Heart left ventricle (tissue), 16 donors: ENCODE measurements at regions of chr2 and their contacts with region 1.

Region 1: DNA sequence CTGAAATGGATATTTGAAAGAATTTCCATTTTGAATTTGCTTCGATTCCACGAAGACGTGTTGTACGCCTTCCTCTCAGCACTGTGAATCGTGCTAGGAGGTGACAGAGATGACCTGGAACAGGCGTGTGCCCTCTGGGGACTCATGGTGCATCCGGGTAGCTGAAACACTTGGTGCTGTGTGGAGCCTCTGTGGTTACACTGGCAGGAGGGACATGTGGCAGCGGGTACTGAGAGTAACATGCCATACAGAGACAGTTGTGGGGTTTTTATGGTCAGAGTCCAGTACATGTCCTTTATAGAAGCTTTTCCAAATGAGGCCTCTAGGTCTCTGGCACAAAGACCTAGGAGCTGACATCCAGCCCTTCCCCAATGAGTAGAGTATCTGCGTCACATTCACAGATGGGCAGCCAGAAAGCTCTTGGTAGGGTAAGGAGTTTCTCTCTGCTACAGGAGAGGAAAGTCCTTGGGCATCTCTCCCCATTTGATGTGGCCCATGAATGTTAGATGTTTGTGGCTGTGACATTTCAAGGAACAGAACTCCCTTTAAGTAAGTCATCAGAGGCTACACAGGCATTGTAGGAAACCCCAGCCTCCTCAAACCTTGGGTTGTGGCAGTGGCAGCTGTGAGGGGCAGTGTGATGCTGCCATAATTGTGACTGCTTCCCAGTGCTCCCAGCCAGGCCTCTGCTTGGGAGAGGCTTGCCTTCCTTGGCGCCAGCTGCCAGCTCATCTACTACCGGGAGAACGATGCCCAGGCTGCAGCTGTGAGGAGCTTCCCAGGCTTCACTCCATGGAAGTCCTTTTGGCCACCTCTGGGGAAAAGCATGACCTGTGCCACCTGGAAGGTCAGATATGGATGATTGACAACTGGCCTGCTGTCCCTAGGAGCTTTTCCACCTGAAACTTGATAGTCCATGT is 80.6 kb downstream of the ACOXL start:
- DNase-seq: no peak
- ATAC-seq: no peak
- H3K4me3 ChIP-seq: no peak overlapping the region
- H3K27ac ChIP-seq: no peak overlapping the region
- H3K4me1 ChIP-seq: peaks cover 0 to 4% (median 0%) of the 10 kb centered on the region in 12 donors
- H3K27me3 ChIP-seq: no peaks in the 10 kb centered on the region
- CTCF ChIP-seq: no peak
- POLR2A ChIP-seq: no peak

Region 2: GRCh38 chr2:111659416-111660281 is 846.7 kb after region 1 on chr2:
- intact Hi-C with region 1: loop called in 2 of 10 experiments (anchors 5 to 10 kb)
- DNase-seq: peak in 2 of 5 donors; percentile 62 to 64
- ATAC-seq: peak; percentile 42 to 80 (median 71)
- H3K4me3 ChIP-seq: no peak overlapping the region
- H3K27ac ChIP-seq: peak overlapping the region in 1 of 12 donors; percentile 59
- H3K4me1 ChIP-seq: peaks cover 0 to 27% (median 0%) of the 10 kb centered on the region in 12 donors
- H3K27me3 ChIP-seq: no peaks in the 10 kb centered on the region
- CTCF ChIP-seq: no peak
- POLR2A ChIP-seq: no peak

Region 3: GRCh38 chr2:111667542-111668273 is 854.7 kb after region 1 on chr2:
- intact Hi-C with region 1: loop called in 4 of 10 experiments (anchors 5 to 10 kb)
- DNase-seq: peak in 3 of 5 donors; percentile 36 to 50 (median 42)
- ATAC-seq: peak; percentile 81 to 96 (median 92)
- H3K4me3 ChIP-seq: no peak overlapping the region
- H3K27ac ChIP-seq: no peak overlapping the region
- H3K4me1 ChIP-seq: peaks cover 0 to 22% (median 0%) of the 10 kb centered on the region in 12 donors
- H3K27me3 ChIP-seq: no peaks in the 10 kb centered on the region
- CTCF ChIP-seq: peak; percentile 30 to 74 (median 54)
- POLR2A ChIP-seq: no peak